ENCODE measurements at regions of chr12 and their contacts with region 1.

Region 1: DNA sequence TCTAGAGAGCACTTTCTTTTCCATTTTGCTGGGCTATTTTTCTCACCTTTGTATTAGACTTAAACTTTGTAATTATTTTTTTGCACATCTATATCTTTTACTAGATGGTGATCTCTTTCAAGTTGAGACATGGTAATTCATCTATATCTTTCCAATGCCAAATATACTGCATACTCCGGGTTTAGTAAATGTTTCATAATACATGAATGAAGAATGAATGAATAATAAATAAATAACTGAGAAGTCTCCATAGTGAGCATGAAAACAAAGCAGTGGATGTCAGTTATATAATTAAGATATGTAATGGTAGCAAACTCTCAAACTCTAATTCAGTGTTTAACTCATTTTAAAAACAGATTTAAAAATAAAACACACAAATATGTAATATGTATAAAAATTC is 342.5 kb upstream of the KITLG start:
- DNase-seq: peak; percentile 61
- H3K4me3 ChIP-seq: no peak overlapping the region
- H3K27ac ChIP-seq: peak overlapping the region; percentile 67
- H3K4me1 ChIP-seq: peaks cover 45% of the 10 kb centered on the region
- H3K27me3 ChIP-seq: no peaks in the 10 kb centered on the region
- CTCF ChIP-seq: no peak

Region 2: GRCh38 chr12:88580051-88580871 is 342.6 kb before region 1 on chr12 and contains the start of gene KITLG:
- CTCF ChIA-PET with region 1: no interaction called
- dilution Hi-C with region 1: no loop called
- in situ Hi-C with region 1: no loop called
- intact Hi-C with region 1: loop called (anchors 5 kb)
- DNase-seq: peak; percentile 90
- H3K4me3 ChIP-seq: peak within 1 kb of the TSS; percentile 96 to 99 (median 98)
- H3K27ac ChIP-seq: peak within 1 kb of the TSS; percentile 69
- H3K4me1 ChIP-seq: peaks cover 22% of the 10 kb centered on the region
- H3K27me3 ChIP-seq: no peaks in the 10 kb centered on the region
- CTCF ChIP-seq: peak; percentile 13 to 63
- total RNA-seq, gene KITLG: 26.2 to 45.3 TPM

Region 3: GRCh38 chr12:88638966-88639760 is 283.7 kb before region 1 on chr12:
- CTCF ChIA-PET with region 1: no interaction called
- dilution Hi-C with region 1: no loop called
- in situ Hi-C with region 1: no loop called
- intact Hi-C with region 1: loop called (anchors 10 kb)
- DNase-seq: no peak
- H3K4me3 ChIP-seq: no peak overlapping the region
- H3K27ac ChIP-seq: no peak overlapping the region
- H3K4me1 ChIP-seq: no peaks in the 10 kb centered on the region
- H3K27me3 ChIP-seq: no peaks in the 10 kb centered on the region
- CTCF ChIP-seq: no peak

Region 4: GRCh38 chr12:88833641-88834116 is 89.1 kb before region 1 on chr12:
- CTCF ChIA-PET with region 1: no interaction called
- dilution Hi-C with region 1: no loop called
- in situ Hi-C with region 1: no loop called
- intact Hi-C with region 1: loop called (anchors 5 kb)
- DNase-seq: peak; percentile 49
- H3K4me3 ChIP-seq: no peak overlapping the region
- H3K27ac ChIP-seq: no peak overlapping the region
- H3K4me1 ChIP-seq: peaks cover 18% of the 10 kb centered on the region
- H3K27me3 ChIP-seq: no peaks in the 10 kb centered on the region
- CTCF ChIP-seq: no peak

Region 5: GRCh38 chr12:88854260-88854659 is 68.6 kb before region 1 on chr12:
- CTCF ChIA-PET with region 1: no interaction called
- dilution Hi-C with region 1: no loop called
- in situ Hi-C with region 1: no loop called
- intact Hi-C with region 1: loop called (anchors 5 kb)
- DNase-seq: peak; percentile 90
- H3K4me3 ChIP-seq: no peak overlapping the region
- H3K27ac ChIP-seq: peak overlapping the region; percentile 58
- H3K4me1 ChIP-seq: peaks cover 13% of the 10 kb centered on the region
- H3K27me3 ChIP-seq: no peaks in the 10 kb centered on the region
- CTCF ChIP-seq: no peak

Region 6: DNA sequence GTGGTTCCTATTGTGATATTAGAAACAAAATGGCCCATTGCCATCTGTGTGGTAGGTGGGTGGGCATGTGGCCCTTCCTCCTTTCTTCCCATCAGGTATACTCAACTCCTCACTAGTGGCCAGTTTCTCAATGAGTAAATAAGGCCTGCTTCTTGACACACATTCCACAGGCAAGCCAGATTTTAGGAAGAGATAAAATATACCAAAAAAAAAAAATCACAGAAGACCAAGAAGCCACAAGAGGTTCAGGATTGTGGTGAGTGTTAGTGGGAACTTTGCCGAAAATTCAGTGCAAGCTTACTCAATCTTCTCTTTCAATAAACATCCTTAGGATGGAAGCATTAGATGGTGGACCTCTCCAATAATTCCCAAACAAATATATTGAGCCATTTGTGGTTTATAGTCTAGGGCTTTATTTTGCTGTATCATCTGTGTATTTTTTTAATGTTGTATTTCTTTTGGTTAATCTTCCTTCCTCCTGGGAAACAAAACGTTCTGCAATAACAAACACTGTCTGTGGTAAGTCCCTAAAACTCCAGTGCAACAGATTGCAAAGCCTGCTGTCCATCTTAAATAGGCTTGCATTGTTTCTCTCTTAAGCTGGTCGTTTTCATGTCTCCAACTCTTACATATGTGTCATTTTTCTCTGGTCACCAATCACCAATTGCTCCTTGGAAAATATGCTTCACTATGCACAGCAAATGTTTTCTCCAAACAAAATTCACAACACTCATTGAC is 52.6 kb before region 1 on chr12:
- CTCF ChIA-PET with region 1: no interaction called
- dilution Hi-C with region 1: no loop called
- in situ Hi-C with region 1: no loop called
- intact Hi-C with region 1: loop called (anchors 5 kb)
- DNase-seq: no peak
- H3K4me3 ChIP-seq: no peak overlapping the region
- H3K27ac ChIP-seq: no peak overlapping the region
- H3K4me1 ChIP-seq: peaks cover 9% of the 10 kb centered on the region
- H3K27me3 ChIP-seq: no peaks in the 10 kb centered on the region
- CTCF ChIP-seq: no peak

Region 7: DNA sequence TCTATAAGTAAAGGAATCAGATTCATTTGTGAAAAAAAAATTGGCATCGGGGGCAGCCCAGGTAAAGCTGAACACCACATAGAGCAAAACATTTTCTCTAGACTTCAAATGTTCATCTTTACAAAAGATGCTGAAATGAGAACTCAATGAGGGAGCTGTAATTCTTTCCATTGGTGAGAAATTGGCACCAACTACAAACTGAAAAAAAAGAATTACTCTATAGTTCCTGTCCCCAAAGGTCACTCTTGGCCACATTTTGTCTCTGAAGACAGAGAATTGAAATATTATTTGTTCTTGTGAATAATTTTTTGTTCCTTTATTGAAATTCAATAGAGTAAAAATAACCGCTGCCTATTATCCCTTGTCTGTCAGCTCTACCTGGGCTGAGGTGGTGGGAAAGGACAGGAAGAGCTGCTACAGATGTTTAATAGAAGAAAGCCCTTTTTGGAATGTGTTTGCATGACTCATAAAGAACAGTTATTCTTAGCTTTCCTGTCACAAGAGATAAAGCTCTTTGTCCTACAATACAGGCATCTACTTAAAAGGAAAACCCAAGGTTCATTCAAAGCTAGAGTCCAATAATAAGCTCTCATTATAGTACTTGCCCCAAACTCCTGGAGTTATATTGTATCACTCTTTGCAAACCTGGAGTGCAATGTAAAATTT is 37.5 kb after region 1 on chr12:
- CTCF ChIA-PET with region 1: no interaction called
- dilution Hi-C with region 1: no loop called
- in situ Hi-C with region 1: no loop called
- intact Hi-C with region 1: no loop called
- DNase-seq: peak; percentile 37
- H3K4me3 ChIP-seq: no peak overlapping the region
- H3K27ac ChIP-seq: no peak overlapping the region
- H3K4me1 ChIP-seq: peaks cover 9% of the 10 kb centered on the region
- H3K27me3 ChIP-seq: no peaks in the 10 kb centered on the region
- CTCF ChIP-seq: no peak

Measured in mammary epithelial cell (primary cell).